Heart left ventricle (tissue), 16 donors: ENCODE measurements at regions of chr1 and their contacts with region 1.

Region 1: GRCh38 chr1:115426231-115426771 is 88.3 kb upstream of the NGF start:
- DNase-seq: peak; percentile 77 to 88 (median 79)
- ATAC-seq: peak; percentile 77 to 96 (median 94)
- H3K4me3 ChIP-seq: no peak overlapping the region
- H3K27ac ChIP-seq: peak overlapping the region in 10 of 12 donors; percentile 30 to 77 (median 52)
- H3K4me1 ChIP-seq: peaks cover 0 to 15% (median 2%) of the 10 kb centered on the region in 12 donors
- H3K27me3 ChIP-seq: no peaks in the 10 kb centered on the region
- CTCF ChIP-seq: no peak
- POLR2A ChIP-seq: no peak

Region 2: DNA sequence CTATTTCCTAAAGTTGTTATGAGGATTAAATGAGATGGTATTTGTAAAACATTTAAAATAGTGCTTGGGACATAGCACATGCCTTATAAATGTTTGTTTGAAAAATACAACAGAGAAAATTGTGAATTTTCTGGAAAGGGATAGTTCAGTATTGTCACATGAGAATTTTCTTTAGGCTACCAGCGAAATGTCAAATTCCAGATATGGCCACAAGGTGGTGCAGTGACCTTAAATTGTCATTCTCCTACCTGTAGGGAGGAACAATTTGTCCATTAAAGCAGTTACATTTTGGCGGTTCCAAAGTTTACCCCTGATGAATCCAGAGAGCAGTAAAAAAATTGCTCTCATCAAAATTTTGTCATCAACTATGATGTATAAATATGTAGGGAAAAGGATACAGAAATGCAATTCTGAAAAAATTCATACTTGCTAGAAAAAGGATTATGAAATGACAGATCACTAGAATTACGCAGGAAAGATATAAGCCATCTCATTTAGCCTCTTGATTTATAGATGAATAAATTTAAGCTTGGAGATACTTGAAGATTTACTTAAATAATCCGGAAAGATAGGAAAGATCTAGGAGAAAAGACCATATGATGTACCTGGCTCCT is 446.9 kb before region 1 on chr1:
- intact Hi-C with region 1: no loop called
- DNase-seq: peak in 4 of 5 donors; percentile 25 to 39 (median 38)
- ATAC-seq: peak in 1 of 4 donors; percentile 51
- H3K4me3 ChIP-seq: no peak overlapping the region
- H3K27ac ChIP-seq: no peak overlapping the region
- H3K4me1 ChIP-seq: no peaks in the 10 kb centered on the region
- H3K27me3 ChIP-seq: peaks cover 0 to 10% (median 0%) of the 10 kb centered on the region in 9 donors
- CTCF ChIP-seq: peak; percentile 73 to 90 (median 80)
- POLR2A ChIP-seq: no peak

Region 3: DNA sequence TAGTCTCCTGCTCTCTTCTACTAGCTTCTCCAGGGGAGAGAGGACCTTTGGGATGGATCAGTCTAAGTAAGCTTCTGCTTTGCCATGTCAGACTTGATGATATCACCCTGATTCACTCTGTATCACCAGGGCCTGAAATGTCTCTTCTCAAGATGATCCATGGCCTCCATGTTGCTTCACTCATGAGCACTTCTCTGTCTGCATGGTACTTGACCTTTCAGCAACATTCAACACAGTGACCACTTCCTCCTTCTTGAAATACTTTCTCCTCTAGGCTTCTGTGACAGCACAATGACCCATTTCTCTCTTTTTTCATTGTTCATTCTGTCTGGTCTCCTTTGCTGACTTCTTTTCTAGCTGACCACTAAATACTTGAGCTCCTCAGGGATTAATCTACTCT is 53.0 kb before region 1 on chr1:
- intact Hi-C with region 1: loop called in 1 of 10 experiments (anchors 5 kb)
- DNase-seq: no peak
- ATAC-seq: no peak
- H3K4me3 ChIP-seq: no peak overlapping the region
- H3K27ac ChIP-seq: no peak overlapping the region
- H3K4me1 ChIP-seq: peaks cover 0 to 3% (median 0%) of the 10 kb centered on the region in 12 donors
- H3K27me3 ChIP-seq: no peaks in the 10 kb centered on the region
- CTCF ChIP-seq: no peak
- POLR2A ChIP-seq: no peak